Activated B cell treated with CpG ODN at 0.5 μM for 24 hours (primary cell): ENCODE measurements at regions of chr3 and their contacts with region 1.

Region 1: GRCh38 chr3:190197346-190197763 is 76.7 kb upstream of the P3H2 start:
- DNase-seq: no peak
- ATAC-seq: no peak
- H3K4me3 Mint-ChIP-seq: no peak overlapping the region
- H3K27ac Mint-ChIP-seq: no peak overlapping the region
- H3K4me1 Mint-ChIP-seq: no peaks in the 10 kb centered on the region
- H3K27me3 Mint-ChIP-seq: no peaks in the 10 kb centered on the region
- CTCF ChIP-seq: no peak

Region 2: DNA sequence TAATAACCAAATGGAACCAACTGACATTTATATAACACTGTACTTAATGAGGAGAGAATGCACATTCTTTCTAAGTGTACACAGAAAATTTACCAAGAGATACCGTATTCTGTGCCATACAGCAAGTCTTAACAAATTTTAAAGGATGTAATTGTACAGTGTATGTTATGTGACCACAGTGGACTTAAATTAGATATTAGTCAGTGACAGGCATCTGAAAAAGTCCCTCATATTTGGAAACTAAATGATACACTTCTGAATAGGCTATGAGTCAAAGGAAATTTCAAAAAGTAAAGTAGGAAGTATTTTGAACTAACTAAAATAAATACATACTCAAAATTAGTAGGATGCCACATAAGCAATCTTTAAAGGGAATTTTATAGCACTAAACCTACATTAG is 17.1 kb before region 1 on chr3:
- CTCF ChIA-PET with region 1: no interaction called
- POLR2A ChIA-PET with region 1: no interaction called
- intact Hi-C with region 1: loop called (anchors 1 kb)
- DNase-seq: no peak
- ATAC-seq: no peak
- H3K4me3 Mint-ChIP-seq: no peak overlapping the region
- H3K27ac Mint-ChIP-seq: no peak overlapping the region
- H3K4me1 Mint-ChIP-seq: no peaks in the 10 kb centered on the region
- H3K27me3 Mint-ChIP-seq: no peaks in the 10 kb centered on the region
- CTCF ChIP-seq: no peak